HepG2 (cell line): ENCODE measurements at regions of chr5 and their contacts with region 1.

Region 1: GRCh38 chr5:110008131-110008530 is 318.4 kb downstream of the MAN2A1 start:
- DNase-seq: no peak
- ATAC-seq: no peak
- H3K4me3 ChIP-seq: no peak overlapping the region
- H3K27ac ChIP-seq: no peak overlapping the region
- H3K4me1 ChIP-seq: peaks cover 31% of the 10 kb centered on the region
- H3K27me3 ChIP-seq: no peaks in the 10 kb centered on the region
- CTCF ChIP-seq: no peak
- EP300 ChIP-seq: no peak
- POLR2A ChIP-seq: no peak
- RAD21 ChIP-seq: no peak

Region 2: GRCh38 chr5:109900911-109901627 is 107.1 kb before region 1 on chr5:
- CTCF ChIA-PET with region 1: no interaction called
- POLR2A ChIA-PET with region 1: interaction called, 8 read pairs
- in situ Hi-C with region 1: no loop called
- intact Hi-C with region 1: loop called (anchors 1 kb)
- DNase-seq: peak; percentile 97
- ATAC-seq: peak; percentile 91
- H3K4me3 ChIP-seq: peak overlapping the region; percentile 17 to 62 (median 29); a peak in 3 of 6 replicates
- H3K27ac ChIP-seq: peak overlapping the region; percentile 99
- H3K4me1 ChIP-seq: peaks cover 84% of the 10 kb centered on the region
- H3K27me3 ChIP-seq: no peaks in the 10 kb centered on the region
- CTCF ChIP-seq: peak; percentile 37; the same call in 1 of the 2 replicates
- EP300 ChIP-seq: peak in 1 of 2 experiments; percentile 84
- POLR2A ChIP-seq: peak in 1 of 2 experiments; percentile 49; a peak in 1 of 4 replicates
- RAD21 ChIP-seq: peak; percentile 41

Region 3: DNA sequence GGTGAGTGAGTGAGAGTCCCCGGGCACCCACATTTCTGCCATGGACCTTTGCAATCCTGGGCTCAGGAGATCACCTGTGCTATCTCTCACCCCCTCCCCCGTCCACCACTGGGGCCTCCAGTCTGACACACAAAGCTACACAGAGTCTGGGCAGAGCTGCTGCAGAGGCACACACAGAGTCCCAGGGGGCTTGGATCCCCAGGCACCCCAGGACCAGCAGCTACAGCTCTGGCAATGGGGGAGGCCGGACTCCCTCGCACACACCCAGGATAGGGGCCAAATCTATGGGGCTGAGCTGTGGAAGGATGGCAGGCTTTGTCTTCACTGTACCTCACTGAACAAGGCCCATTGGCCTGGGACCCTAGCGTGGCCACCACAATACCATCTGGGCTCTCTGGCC is 10.4 kb after region 1 on chr5:
- CTCF ChIA-PET with region 1: no interaction called
- POLR2A ChIA-PET with region 1: interaction called, 10 read pairs
- in situ Hi-C with region 1: no loop called
- intact Hi-C with region 1: no loop called
- DNase-seq: no peak
- ATAC-seq: peak; percentile 67
- H3K4me3 ChIP-seq: no peak overlapping the region
- H3K27ac ChIP-seq: peak overlapping the region; percentile 53
- H3K4me1 ChIP-seq: peaks cover 34% of the 10 kb centered on the region
- H3K27me3 ChIP-seq: no peaks in the 10 kb centered on the region
- CTCF ChIP-seq: no peak
- EP300 ChIP-seq: no peak
- POLR2A ChIP-seq: no peak
- RAD21 ChIP-seq: no peak

Region 4: GRCh38 chr5:110045158-110045557 is 37.0 kb after region 1 on chr5:
- CTCF ChIA-PET with region 1: no interaction called
- POLR2A ChIA-PET with region 1: no interaction called
- in situ Hi-C with region 1: no loop called
- intact Hi-C with region 1: no loop called
- DNase-seq: no peak
- ATAC-seq: peak; percentile 46; the same call in 1 of the 3 replicates
- H3K4me3 ChIP-seq: no peak overlapping the region
- H3K27ac ChIP-seq: no peak overlapping the region
- H3K4me1 ChIP-seq: no peaks in the 10 kb centered on the region
- H3K27me3 ChIP-seq: no peaks in the 10 kb centered on the region
- CTCF ChIP-seq: peak; percentile 20; the same call in 1 of the 2 replicates
- EP300 ChIP-seq: no peak
- POLR2A ChIP-seq: no peak
- RAD21 ChIP-seq: 0 out of 2 replicates have a peak, but pooled peaks have one; percentile 14

Region 5: GRCh38 chr5:110346893-110347358 is 338.8 kb after region 1 on chr5:
- CTCF ChIA-PET with region 1: no interaction called
- POLR2A ChIA-PET with region 1: no interaction called
- in situ Hi-C with region 1: no loop called
- intact Hi-C with region 1: loop called (anchors 1 kb)
- DNase-seq: peak; percentile 97
- ATAC-seq: peak; percentile 91
- H3K4me3 ChIP-seq: no peak overlapping the region
- H3K27ac ChIP-seq: peak overlapping the region; percentile 84
- H3K4me1 ChIP-seq: peaks cover 55% of the 10 kb centered on the region
- H3K27me3 ChIP-seq: no peaks in the 10 kb centered on the region
- CTCF ChIP-seq: no peak
- EP300 ChIP-seq: peak; percentile 94 to 97
- POLR2A ChIP-seq: no peak
- RAD21 ChIP-seq: no peak